Endothelial cell of umbilical vein (primary cell): ENCODE measurements at regions of chr18 and their contacts with region 1.

Region 1: GRCh38 chr18:21191596-21192307 is 50.3 kb upstream of the GREB1L start:
- DNase-seq: peak; percentile 24
- H3K4me3 ChIP-seq: no peak overlapping the region
- H3K27ac ChIP-seq: no peak overlapping the region
- H3K4me1 ChIP-seq: no peaks in the 10 kb centered on the region
- H3K27me3 ChIP-seq: peaks cover 1 to 2% of the 10 kb centered on the region in 2 experiments
- CTCF ChIP-seq: peak; percentile 49 to 81
- POLR2A ChIP-seq: no peak

Region 2: DNA sequence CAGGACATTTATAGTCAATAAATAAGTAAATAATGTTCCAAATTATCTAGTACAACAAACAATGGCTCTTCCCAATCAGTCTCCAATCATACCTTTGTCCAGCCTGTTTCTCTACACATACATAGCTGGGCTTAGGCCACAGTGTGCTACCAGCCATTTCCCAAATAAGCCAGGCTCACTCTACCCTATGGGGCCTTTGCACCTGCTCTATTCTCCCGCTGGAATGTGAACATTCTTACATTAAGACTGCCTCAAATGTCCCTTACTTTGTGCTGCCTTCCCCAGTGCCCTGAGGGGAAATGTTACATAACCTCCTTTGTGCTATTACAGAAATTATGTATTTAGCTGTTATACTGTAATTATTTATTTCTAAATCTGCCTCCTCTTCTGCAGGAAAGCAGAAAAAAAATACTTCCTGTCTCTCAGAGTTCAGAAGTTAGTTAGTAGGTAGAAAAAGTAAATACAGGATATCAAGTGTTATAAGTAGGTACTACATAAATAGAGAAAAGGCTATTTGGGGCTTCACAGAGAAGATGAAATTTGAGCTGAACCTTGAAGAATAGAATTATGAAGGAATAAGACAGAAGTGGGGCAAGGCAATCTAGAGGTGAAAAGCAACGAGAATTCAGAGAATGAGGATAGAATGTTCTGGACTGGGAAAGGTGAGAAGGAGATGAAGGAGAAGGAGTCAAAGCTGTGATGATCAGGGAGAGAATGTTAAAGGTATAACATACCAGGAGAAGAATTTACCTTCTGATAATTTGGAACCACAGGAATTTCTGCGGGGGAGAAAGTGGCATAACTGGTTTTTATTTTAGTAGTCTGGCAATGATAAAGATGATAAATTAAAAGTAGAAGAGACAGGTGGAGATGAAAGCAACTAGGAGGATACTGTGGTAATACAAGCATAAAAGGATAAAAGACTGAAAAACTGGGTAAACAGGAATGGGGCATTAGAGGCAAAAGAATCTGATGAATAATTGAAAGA is 117.1 kb before region 1 on chr18:
- CTCF ChIA-PET with region 1: no interaction called
- POLR2A ChIA-PET with region 1: no interaction called
- dilution Hi-C with region 1: no loop called
- intact Hi-C with region 1: no loop called
- DNase-seq: peak; percentile 14
- H3K4me3 ChIP-seq: no peak overlapping the region
- H3K27ac ChIP-seq: no peak overlapping the region
- H3K4me1 ChIP-seq: no peaks in the 10 kb centered on the region
- H3K27me3 ChIP-seq: no peaks in the 10 kb centered on the region
- CTCF ChIP-seq: no peak
- POLR2A ChIP-seq: no peak

Region 3: DNA sequence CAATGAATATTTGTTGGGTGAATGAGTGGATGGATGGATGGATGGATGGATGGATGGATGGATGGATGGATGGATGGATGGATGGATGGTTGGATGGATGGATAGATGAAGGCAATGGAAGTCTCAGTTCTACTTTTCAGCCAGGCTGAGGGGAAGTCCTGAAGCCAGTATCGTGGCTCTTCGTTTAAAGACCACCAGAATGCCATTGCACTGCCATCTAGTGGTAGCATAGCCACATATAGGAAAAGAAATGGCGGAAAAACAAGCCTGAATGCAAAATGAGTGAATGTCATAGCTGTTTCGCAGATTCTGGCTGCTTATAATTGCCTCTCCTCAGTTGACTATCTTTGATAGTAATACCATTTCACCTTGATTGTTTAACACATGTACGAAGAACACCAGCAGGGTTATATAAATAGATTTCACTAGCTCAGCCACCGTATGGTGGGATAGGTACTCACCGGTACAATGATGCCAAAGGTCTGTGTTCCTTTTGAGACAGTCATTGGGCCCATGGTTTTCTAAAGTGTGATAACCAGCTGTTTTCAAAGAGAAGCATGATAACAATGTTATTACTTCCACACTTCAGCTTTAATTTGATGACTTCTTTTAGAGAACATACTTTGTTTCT is 12.0 kb before region 1 on chr18:
- CTCF ChIA-PET with region 1: interaction called, 14 read pairs
- POLR2A ChIA-PET with region 1: no interaction called
- dilution Hi-C with region 1: no loop called
- intact Hi-C with region 1: no loop called
- DNase-seq: peak; percentile 50
- H3K4me3 ChIP-seq: no peak overlapping the region
- H3K27ac ChIP-seq: no peak overlapping the region
- H3K4me1 ChIP-seq: no peaks in the 10 kb centered on the region
- H3K27me3 ChIP-seq: no peaks in the 10 kb centered on the region
- CTCF ChIP-seq: peak; percentile 67 to 75
- POLR2A ChIP-seq: no peak

Region 4: DNA sequence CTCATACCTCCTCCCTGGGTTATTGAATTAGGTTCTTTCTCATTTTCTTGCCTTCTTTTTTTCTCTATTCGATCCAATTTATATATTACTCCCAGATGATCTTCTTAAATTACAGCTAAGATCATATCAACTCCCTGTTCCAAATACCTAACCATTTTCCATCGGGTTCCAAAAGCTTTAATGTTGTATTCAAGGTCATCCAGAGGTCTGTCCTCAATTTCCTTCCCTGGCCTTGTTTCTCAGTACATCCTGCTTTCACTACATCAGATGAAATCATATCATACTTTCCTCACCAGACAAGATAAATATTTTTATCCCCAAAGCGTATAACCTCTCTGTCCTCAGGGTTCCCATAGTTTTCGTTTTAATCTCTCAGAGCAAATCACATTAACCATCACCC is 13.9 kb after region 1 on chr18:
- CTCF ChIA-PET with region 1: interaction called, 12 read pairs
- POLR2A ChIA-PET with region 1: no interaction called
- dilution Hi-C with region 1: no loop called
- intact Hi-C with region 1: no loop called
- DNase-seq: no peak
- H3K4me3 ChIP-seq: no peak overlapping the region
- H3K27ac ChIP-seq: no peak overlapping the region
- H3K4me1 ChIP-seq: no peaks in the 10 kb centered on the region
- H3K27me3 ChIP-seq: no peaks in the 10 kb centered on the region
- CTCF ChIP-seq: no peak
- POLR2A ChIP-seq: no peak

Region 5: DNA sequence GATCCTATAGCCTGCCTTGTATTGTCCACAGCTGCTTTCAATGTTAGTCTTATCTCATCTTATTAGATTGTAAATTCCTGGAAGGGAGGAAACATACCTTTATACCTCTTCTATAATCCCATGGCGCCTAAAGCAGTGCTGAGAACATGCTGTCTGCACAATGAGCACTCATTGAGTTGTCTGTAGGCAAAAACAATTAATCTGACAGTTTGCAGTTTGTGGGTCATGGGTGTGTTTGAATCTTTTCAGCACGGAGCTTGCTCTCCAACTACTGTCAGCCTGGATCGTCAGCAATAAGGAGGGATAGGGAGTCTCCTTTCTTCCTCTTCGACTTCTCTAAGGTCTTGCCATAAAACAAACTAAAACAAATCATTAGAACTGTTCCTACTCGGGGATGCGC is 23.7 kb after region 1 on chr18:
- CTCF ChIA-PET with region 1: interaction called, 16 read pairs
- POLR2A ChIA-PET with region 1: no interaction called
- dilution Hi-C with region 1: no loop called
- intact Hi-C with region 1: no loop called
- DNase-seq: no peak
- H3K4me3 ChIP-seq: no peak overlapping the region
- H3K27ac ChIP-seq: no peak overlapping the region
- H3K4me1 ChIP-seq: no peaks in the 10 kb centered on the region
- H3K27me3 ChIP-seq: no peaks in the 10 kb centered on the region
- CTCF ChIP-seq: no peak
- POLR2A ChIP-seq: no peak

Region 6: DNA sequence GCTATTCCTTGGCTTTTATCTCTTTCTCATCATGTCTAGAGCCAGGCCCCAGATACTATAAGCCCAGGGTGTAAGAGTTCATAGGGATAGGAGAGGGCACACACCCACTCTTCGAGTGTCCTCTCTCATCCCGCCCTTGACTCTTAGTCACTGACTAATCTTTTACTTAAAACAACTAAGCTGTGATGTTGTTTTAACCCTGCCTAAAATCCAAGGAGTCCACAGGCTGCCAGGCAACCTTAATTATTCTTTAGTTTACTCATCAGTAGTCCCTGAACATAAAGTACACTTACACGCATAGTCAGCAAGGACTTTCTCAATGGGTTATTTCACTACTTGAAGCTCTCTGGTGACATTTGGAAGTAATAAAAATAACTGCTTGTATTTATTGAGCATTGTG is 78.7 kb after region 1 on chr18:
- CTCF ChIA-PET with region 1: no interaction called
- POLR2A ChIA-PET with region 1: no interaction called
- dilution Hi-C with region 1: no loop called
- intact Hi-C with region 1: no loop called
- DNase-seq: no peak
- H3K4me3 ChIP-seq: no peak overlapping the region
- H3K27ac ChIP-seq: no peak overlapping the region
- H3K4me1 ChIP-seq: no peaks in the 10 kb centered on the region
- H3K27me3 ChIP-seq: no peaks in the 10 kb centered on the region
- CTCF ChIP-seq: no peak
- POLR2A ChIP-seq: no peak

Region 7: DNA sequence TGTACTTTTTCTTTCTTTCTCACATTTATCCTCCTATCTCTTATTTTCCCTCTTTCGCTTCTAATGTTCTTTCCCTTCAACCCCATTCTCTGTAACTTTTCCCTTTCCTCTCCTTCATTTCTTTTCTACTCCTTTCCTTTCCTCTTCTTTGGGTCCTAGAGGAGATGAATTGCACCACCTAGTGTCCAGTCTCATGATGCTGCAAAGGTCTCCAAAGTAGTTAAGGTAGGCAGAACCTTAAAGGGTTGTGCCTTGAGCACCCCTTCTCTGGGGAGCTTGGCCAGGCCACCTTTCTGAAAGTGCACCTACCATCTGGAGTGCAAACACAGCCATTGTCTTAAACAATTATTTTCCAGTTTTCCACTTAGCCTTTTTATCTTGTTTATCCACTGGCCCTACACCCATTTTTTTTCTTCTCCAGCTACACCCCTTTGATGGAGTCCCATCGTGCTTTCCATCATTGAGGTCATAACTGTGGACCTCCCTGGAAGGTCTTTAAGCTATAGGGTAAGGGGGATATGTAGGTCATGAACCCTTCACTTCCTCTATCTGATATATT is 252.8 kb after region 1 on chr18:
- CTCF ChIA-PET with region 1: interaction called, 147 read pairs
- POLR2A ChIA-PET with region 1: no interaction called
- dilution Hi-C with region 1: no loop called
- intact Hi-C with region 1: loop called (anchors 1 kb)
- DNase-seq: peak; percentile 48
- H3K4me3 ChIP-seq: no peak overlapping the region
- H3K27ac ChIP-seq: no peak overlapping the region
- H3K4me1 ChIP-seq: no peaks in the 10 kb centered on the region
- H3K27me3 ChIP-seq: peaks cover 0 to 7% of the 10 kb centered on the region in 2 experiments
- CTCF ChIP-seq: peak; percentile 58 to 67
- POLR2A ChIP-seq: no peak

Region 8: DNA sequence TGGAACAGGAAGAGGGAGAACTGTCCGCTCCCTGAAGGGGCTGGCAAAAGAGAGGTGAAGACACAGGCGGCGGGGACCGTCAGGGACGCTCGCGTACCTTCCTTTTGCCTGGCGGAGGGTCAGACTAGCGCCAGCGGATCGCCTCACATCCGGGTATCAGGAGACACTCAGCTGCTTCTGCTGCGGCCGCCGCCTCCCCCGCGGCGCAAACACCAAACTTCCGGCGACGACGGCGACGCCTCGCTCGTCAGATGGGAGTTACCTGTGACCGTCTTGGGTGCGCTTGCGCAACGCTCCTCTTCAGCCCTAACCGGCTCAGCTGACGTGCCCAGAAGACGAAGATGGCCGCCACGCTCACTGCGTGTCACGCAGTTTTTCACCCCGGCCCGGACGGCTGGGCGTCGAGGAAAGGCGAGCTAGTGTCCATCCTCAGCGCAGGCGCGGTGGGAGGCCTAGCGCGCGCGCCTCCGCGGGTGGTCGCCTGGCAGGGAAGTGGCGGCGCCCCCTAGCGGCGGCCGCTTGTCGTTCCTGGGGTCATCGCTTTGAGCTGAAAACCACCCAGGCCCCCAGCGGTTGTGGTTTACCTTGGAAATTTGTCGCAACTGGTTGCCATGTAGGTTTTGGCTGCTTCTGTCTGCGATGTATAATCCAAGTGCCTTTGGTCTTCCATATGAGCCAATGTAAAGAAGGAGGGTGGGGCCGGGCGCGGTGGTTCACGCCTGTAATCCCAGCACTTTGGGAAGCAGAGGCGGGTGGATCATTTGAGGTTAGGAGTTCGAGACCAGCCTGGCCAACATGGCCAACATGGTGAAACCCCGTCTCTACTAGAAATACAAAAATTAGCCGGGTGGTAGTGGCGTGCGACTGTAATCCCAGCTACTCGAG is 409.0 kb after region 1 on chr18 and contains the start of gene ESCO1:
- CTCF ChIA-PET with region 1: interaction called, 55 read pairs
- POLR2A ChIA-PET with region 1: no interaction called
- dilution Hi-C with region 1: no loop called
- intact Hi-C with region 1: loop called (anchors 5 kb)
- DNase-seq: peak; percentile 98
- H3K4me3 ChIP-seq: peak within 1 kb of the TSS; percentile 47 to 89 (median 68)
- H3K27ac ChIP-seq: peak within 1 kb of the TSS; percentile 59
- H3K4me1 ChIP-seq: no peaks in the 10 kb centered on the region
- H3K27me3 ChIP-seq: no peaks in the 10 kb centered on the region
- CTCF ChIP-seq: peak; percentile 97 to 99
- POLR2A ChIP-seq: peak; percentile 83
- total RNA-seq, gene ESCO1: 9.1 and 12.0 TPM in 2 replicates

Region 9: DNA sequence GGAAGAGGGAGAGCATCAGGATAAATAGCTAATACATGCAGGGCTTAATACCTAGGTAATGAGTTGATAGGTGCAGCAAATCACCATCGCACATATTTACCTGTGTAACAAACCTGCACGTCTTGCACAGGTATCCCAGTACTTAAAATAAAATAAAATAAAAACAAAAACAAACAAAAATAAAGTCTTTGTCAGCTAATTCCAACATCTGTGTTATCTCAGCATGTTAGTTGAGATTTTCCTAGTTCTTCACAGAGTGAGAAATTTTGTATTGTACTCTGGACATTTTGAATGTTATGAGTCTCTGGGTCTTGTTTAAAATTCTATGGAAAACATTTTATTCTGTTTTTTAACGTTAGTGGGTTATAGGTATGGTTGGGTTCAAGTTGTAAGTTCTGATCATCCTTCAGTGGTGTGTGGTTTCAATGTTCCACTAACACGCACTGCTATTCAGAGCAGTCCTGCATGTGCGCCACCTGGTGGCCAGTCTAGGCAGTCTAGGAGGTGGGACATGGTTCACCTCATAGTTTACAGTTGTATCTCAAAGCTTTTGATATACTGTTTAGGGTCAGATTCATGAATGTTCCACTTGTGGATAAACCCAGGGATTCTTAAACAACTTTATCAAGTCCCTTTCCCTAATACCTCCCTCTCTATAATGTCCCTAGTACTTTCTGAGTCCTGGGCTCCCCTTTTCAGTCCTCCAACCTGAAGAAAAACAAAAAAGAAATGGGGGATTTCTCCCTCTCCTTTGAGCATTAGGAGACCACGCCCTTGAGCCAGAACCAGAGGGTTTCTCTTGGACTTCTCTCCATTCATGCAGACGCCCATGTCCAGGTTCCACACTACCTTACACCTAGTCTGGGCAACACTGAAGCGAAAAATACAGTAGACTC is 764.3 kb after region 1 on chr18:
- CTCF ChIA-PET with region 1: interaction called, 6 read pairs
- POLR2A ChIA-PET with region 1: no interaction called
- dilution Hi-C with region 1: no loop called
- intact Hi-C with region 1: loop called (anchors 1 kb)
- DNase-seq: peak; percentile 66
- H3K4me3 ChIP-seq: no peak overlapping the region
- H3K27ac ChIP-seq: no peak overlapping the region
- H3K4me1 ChIP-seq: no peaks in the 10 kb centered on the region
- H3K27me3 ChIP-seq: peaks cover 3 to 8% of the 10 kb centered on the region in 2 experiments
- CTCF ChIP-seq: peak; percentile 86 to 94
- POLR2A ChIP-seq: no peak